MCF 10A (cell line): ENCODE measurements at regions of chr6 and their contacts with region 1.

Region 1: DNA sequence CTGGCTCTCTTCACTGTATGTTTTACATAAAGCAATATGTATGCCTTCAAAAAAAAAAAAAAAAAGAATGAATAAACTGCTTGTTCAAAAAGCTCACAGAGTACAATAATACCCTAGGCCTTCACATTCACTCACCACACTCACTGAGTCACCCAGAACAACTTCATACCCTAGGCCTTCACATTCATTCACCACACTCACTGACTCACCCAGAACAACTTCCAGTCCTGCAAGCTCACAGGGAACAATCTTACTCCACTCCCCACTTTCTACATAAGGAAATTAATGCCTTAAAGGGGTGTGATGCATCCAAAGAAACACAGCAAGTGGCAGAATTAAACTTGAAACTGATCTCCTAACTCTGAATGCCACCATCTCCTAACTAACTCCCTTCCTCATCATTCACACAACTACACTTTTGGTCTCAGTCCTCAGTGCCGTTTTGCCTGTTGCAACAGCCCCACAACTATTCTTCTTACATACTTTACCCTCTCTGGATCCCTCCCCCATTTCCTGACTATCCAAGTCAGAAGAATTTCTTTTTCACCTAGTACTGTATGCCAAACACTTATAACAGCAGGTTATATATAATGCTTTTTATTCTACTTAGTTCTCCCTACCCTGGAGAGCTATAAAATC is 34.2 kb downstream of the NHSL1 start:
- DNase-seq: peak; percentile 95
- H3K4me3 Mint-ChIP-seq: peak overlapping the region; percentile 16
- H3K27ac Mint-ChIP-seq: peak overlapping the region; percentile 75
- H3K4me1 Mint-ChIP-seq: peaks cover 45% of the 10 kb centered on the region
- H3K27me3 Mint-ChIP-seq: no peaks in the 10 kb centered on the region
- CTCF ChIP-seq: no peak

Region 2: GRCh38 chr6:138493413-138493812 is 28.3 kb after region 1 on chr6:
- CTCF ChIA-PET with region 1: interaction called, 4 read pairs
- POLR2A ChIA-PET with region 1: interaction called, 24 read pairs
- intact Hi-C with region 1: no loop called
- DNase-seq: peak; percentile 79
- H3K4me3 Mint-ChIP-seq: peak overlapping the region; percentile 67
- H3K27ac Mint-ChIP-seq: peak overlapping the region; percentile 98
- H3K4me1 Mint-ChIP-seq: peaks cover 12% of the 10 kb centered on the region
- H3K27me3 Mint-ChIP-seq: no peaks in the 10 kb centered on the region
- CTCF ChIP-seq: no peak